Transverse colon (tissue), 4 donors: ENCODE measurements at regions of chr10 and their contacts with region 1.

Region 1: DNA sequence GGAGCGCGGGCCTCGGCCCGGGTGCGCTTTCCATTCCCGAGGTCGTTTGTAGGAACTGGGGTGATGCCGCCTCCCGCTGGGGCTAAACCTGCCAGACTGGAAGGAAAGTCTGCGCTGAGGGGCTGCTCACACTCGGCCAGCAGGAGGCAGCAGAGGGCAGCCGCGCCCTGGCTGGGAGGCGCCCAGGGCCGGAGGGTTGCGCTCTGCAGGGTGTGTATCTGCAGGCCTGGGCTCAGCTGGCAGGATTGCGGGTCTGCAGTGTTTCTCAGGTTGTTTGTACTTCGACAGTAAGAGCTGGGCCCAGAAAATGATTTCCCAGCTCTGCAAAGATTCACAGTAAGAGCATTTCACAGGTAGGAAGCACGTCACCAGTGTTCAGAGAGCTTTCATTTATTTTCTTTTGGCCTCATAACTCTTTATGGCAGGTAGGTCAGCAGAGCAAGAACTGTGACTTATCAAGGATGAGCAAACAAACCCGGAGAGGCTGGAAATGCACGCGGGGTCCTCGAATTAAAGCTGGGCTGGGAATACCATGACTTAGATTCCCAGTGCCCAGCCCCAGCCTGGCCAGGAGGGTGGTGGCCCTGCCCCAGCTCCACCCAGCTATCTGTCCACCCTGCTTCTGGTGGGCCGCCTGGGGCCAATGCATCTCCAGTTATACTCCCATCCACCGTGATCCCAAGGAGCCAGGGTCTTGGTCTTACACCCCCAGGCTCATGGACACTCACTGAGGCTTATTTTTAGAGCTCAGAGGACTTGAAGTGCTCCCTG is 15.2 kb upstream of the PPP2R2D start:
- DNase-seq: peak; percentile 82
- H3K4me3 ChIP-seq: no peak overlapping the region
- H3K27ac ChIP-seq: no peak overlapping the region
- H3K4me1 ChIP-seq: peaks cover 0 to 7% (median 0%) of the 10 kb centered on the region in 4 donors
- H3K27me3 ChIP-seq: peaks cover 10% of the 10 kb centered on the region
- CTCF ChIP-seq: peak; percentile 94 to 98 (median 97)
- EP300 ChIP-seq: no peak
- POLR2A ChIP-seq: no peak

Region 2: DNA sequence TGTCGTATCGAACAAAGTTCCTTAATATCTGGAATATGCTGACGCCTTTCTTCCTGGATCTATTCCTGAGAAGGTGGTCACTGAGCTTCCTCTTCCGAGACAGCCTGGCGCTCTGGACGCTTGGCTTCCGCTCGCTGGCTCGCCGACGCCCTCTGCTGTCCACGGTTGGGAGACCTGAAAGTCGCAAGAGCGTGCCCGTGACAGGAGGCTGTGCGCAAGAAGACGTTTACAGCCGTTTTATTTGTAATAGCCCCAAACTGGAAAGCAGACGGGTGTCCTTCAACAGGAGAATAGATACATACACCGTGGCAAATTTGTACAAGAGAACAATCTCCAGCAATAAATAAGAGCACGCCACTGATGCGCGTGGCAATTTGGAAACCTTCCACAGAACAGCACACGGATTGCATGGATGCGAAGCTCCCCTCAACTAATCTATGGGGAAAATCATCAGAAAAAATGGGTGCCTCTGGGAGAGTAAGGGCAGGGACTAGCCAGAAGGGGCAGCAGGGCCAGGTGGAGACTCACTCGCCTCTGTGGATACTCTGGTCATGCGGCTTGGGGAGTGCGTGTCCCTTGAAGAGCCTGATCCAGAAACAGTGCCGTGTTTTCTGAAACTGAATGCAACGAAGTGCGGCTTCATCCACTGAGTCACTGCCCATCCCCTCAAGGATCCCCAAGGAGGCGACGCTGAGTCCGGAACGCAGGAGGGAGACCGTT is 137.7 kb after region 1 on chr10:
- in situ Hi-C with region 1: loop called (anchors 5 to 10 kb)
- intact Hi-C with region 1: loop called (anchors 5 kb)
- DNase-seq: peak; percentile 84
- H3K4me3 ChIP-seq: peak overlapping the region; percentile 0 to 41 (median 11)
- H3K27ac ChIP-seq: no peak overlapping the region
- H3K4me1 ChIP-seq: peaks cover 0 to 8% (median 3%) of the 10 kb centered on the region in 4 donors
- H3K27me3 ChIP-seq: peaks cover 43% of the 10 kb centered on the region
- CTCF ChIP-seq: peak; percentile 82 to 88 (median 84)
- EP300 ChIP-seq: no peak
- POLR2A ChIP-seq: no peak

Region 3: DNA sequence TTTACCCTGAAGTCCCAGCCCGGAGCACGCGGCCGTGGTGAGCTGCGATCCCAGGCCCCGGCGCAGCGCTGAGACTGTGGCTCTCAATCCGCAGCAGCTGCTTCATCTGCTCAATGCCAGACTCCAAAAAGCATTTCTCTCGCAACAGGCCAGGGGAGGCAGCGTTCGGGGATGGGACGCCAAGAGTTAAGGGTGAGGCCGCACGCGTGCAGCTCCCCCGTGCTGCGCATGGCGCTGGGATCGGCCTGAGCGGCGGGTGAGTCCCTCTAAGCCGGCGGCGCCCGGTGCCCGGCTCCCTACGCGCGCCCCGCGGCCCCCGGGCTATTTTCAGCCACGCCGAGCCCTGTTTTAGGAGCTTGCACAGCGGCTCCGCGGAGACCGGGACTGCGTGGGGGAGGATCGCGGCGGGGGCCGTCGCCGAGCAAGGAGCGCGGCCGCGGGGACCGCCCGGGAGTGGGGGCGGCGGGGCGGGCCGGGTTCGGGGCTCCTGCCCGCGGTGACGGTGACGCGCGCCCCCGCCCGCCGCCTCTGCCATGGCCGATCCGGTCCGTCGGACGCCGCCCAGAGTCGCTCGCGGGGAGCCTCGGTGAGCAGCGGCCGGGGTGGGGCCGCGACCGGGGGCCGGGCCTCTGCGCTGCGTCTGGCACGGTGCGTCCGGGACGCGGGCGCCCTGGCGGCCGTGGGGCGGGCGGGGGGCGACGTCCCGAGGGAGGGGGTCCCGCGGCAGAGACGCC is 150.7 kb after region 1 on chr10:
- in situ Hi-C with region 1: no loop called
- intact Hi-C with region 1: loop called (anchors 5 kb)
- DNase-seq: no peak
- H3K4me3 ChIP-seq: peak overlapping the region in 3 of 4 donors; percentile 23 to 49 (median 40)
- H3K27ac ChIP-seq: peak overlapping the region in 1 of 4 donors; percentile 21
- H3K4me1 ChIP-seq: peaks cover 0 to 11% (median 5%) of the 10 kb centered on the region in 4 donors
- H3K27me3 ChIP-seq: peaks cover 69% of the 10 kb centered on the region
- CTCF ChIP-seq: no peak
- EP300 ChIP-seq: no peak
- POLR2A ChIP-seq: no peak

Region 4: GRCh38 chr10:132142411-132143161 is 257.0 kb after region 1 on chr10:
- in situ Hi-C with region 1: loop called in 2 of 4 experiments (anchors 25 kb)
- intact Hi-C with region 1: loop called (anchors 5 kb)
- DNase-seq: peak; percentile 27
- H3K4me3 ChIP-seq: no peak overlapping the region
- H3K27ac ChIP-seq: no peak overlapping the region
- H3K4me1 ChIP-seq: no peaks in the 10 kb centered on the region
- H3K27me3 ChIP-seq: peaks cover 11% of the 10 kb centered on the region
- CTCF ChIP-seq: peak; percentile 62 to 88 (median 86)
- EP300 ChIP-seq: no peak
- POLR2A ChIP-seq: no peak